ENCODE measurements at regions of chr10 and their contacts with region 1.

Region 1: DNA sequence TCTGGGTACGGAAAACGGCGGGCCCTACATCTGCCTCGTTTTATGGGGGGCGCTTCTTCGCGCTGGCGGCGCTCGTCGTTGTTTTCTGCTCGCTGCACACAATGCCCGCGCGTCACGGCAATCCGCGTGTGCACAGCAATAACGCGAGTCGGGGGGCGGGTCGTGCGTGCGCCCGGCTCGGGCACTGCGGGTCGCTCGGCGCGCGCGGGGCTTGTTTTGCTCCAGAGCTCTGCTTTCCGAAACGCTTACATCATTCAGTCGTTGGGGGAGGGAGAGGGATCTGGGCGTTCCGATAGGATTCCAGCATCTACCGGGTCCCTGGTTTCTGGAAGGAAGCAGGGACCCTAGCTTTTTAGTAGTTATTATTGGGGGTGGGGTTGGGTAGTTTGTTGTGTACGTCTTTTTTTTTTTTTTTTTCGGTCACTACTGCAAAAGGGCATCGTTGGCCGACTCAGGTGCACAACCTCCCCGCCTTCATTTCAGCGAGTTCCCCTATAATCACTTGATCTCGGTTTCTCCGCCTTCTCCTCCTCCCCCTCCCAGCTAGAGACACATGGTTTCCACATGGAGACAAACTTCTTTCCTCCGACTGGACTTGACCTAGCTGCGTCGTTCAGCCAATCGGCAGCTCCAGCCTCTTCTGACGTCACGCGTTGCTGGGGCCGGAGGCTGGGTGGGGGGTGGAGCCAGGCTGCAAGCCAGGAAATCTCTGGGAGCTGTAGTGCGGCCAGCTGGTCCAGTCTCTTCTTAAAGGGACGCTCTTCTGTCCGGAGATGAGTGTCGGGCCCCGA is 3.5 kb downstream of the MXI1 start:
- DNase-seq: peak; percentile 98
- H3K4me3 ChIP-seq: peak overlapping the region; percentile 92
- H3K27ac ChIP-seq: peak overlapping the region; percentile 89
- H3K4me1 ChIP-seq: peaks cover 11% of the 10 kb centered on the region
- H3K27me3 ChIP-seq: no peaks in the 10 kb centered on the region
- CTCF ChIP-seq: no peak

Region 2: DNA sequence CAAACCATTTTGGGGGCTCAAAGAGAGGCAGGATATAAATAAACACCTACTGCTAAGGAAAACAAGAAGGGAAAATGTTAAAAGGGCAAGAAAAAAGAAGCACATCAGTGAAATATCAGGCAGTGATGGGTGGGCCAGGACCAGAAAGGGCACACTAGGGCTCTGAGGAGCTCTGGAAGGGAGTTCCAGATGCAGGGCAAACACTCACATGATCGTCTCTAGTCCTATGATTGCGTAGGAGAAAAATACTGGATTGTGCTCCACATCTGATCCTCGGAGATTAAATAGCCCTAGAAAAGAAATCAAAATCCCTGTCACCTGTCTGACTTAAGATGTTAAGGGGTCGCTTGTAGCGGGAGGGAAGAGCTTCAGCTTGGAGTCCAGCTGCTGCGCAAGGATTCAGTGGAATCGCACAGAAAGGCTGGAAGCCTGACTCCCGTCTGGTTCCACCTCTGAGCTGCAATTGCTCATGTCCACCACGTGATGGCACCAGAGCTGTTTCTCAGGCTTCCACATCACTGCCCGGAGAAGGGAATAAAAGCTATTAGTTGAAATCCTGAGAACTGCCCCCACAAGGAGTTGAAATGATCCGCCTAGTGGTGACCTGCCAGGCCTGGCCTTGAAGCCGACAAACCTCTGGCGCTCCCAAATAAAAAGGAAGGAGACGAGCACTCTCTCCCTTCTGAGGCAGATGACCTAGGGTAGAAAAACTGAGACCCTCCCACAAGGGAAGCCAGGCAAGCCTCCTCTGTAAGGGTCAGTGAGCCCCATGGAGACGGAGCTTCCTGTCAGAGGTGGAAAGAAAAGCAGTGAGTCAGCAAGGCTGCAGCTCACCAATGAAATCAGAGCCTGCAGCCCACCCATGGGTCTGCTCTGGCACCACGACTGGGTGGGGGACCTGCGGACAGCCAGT is 326.8 kb before region 1 on chr10:
- CTCF ChIA-PET with region 1: interaction called, 5 read pairs
- POLR2A ChIA-PET with region 1: interaction called, 13 read pairs
- intact Hi-C with region 1: loop called (anchors 5 kb)
- DNase-seq: peak; percentile 89
- H3K4me3 ChIP-seq: no peak overlapping the region
- H3K27ac ChIP-seq: no peak overlapping the region
- H3K4me1 ChIP-seq: peaks cover 4% of the 10 kb centered on the region
- H3K27me3 ChIP-seq: no peaks in the 10 kb centered on the region
- CTCF ChIP-seq: peak; percentile 95

Region 3: GRCh38 chr10:109953766-109954165 is 257.1 kb before region 1 on chr10:
- CTCF ChIA-PET with region 1: no interaction called
- POLR2A ChIA-PET with region 1: no interaction called
- intact Hi-C with region 1: no loop called
- DNase-seq: no peak
- H3K4me3 ChIP-seq: no peak overlapping the region
- H3K27ac ChIP-seq: no peak overlapping the region
- H3K4me1 ChIP-seq: no peaks in the 10 kb centered on the region
- H3K27me3 ChIP-seq: no peaks in the 10 kb centered on the region
- CTCF ChIP-seq: no peak

Region 4: GRCh38 chr10:110137142-110137545 is 73.7 kb before region 1 on chr10:
- CTCF ChIA-PET with region 1: interaction called, 3 read pairs
- POLR2A ChIA-PET with region 1: no interaction called
- intact Hi-C with region 1: loop called (anchors 5 kb)
- DNase-seq: peak; percentile 81
- H3K4me3 ChIP-seq: no peak overlapping the region
- H3K27ac ChIP-seq: no peak overlapping the region
- H3K4me1 ChIP-seq: peaks cover 4% of the 10 kb centered on the region
- H3K27me3 ChIP-seq: no peaks in the 10 kb centered on the region
- CTCF ChIP-seq: peak; percentile 77

Region 5: GRCh38 chr10:110225756-110226542 is 15.1 kb after region 1 on chr10:
- CTCF ChIA-PET with region 1: interaction called, 6 read pairs
- POLR2A ChIA-PET with region 1: interaction called, 6 read pairs
- intact Hi-C with region 1: loop called (anchors 1 kb)
- DNase-seq: peak; percentile 97
- H3K4me3 ChIP-seq: peak overlapping the region; percentile 73
- H3K27ac ChIP-seq: peak overlapping the region; percentile 70
- H3K4me1 ChIP-seq: peaks cover 20% of the 10 kb centered on the region
- H3K27me3 ChIP-seq: no peaks in the 10 kb centered on the region
- CTCF ChIP-seq: peak; percentile 55

Region 6: DNA sequence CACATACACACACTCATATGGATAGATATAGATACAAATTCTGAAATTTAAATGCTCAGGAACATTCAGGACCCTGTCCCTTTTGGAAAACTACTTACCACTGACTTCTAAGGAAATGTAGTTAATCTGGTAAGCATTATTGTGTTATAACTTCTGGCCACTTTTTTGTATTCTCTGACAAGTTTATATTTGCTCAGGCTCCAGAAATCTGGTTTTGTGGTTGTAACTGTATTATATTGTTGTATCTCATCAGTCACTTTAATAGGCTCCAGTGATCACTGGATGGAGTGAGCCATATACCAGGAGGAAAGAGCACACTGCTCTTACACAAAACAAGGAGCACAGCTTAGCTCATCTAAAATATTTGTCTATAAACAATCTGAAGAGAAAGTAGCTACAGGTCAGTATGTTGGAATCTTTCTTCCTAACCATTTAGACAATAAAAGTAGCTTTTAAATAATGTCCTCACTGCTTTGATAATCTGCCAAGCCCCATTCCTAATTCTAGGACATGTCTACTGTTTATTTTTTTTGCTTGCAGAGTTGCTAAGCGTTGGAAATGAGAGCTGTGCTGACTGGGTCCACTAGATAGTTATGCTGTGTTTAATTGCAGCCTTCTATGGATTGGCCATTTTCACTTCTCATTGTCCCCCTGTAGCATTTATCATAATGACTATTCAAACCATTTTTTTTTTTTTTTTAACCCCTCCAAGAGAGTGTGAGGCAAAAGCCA is 50.0 kb after region 1 on chr10:
- CTCF ChIA-PET with region 1: no interaction called
- POLR2A ChIA-PET with region 1: no interaction called
- intact Hi-C with region 1: no loop called
- DNase-seq: no peak
- H3K4me3 ChIP-seq: no peak overlapping the region
- H3K27ac ChIP-seq: no peak overlapping the region
- H3K4me1 ChIP-seq: no peaks in the 10 kb centered on the region
- H3K27me3 ChIP-seq: no peaks in the 10 kb centered on the region
- CTCF ChIP-seq: no peak

Region 7: DNA sequence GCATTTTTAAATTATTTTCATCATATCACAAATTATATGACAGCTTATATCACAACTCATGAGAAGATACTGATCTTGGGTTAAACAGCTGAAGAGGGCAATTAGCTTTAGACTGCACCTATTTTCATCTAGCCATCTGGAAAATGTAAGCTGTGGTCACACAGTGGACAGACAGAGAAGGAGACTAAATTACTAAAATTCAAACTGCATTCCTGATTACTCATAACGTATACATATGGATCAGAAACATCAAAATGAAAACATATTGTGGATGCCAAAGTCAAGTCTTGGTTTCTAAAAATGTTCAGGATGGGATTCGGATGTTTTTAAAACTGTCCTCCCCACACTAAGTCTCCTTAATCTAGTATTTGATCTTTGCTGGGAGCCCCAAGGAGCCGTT is 701.5 kb after region 1 on chr10:
- CTCF ChIA-PET with region 1: no interaction called
- POLR2A ChIA-PET with region 1: no interaction called
- intact Hi-C with region 1: no loop called
- DNase-seq: no peak
- H3K4me3 ChIP-seq: no peak overlapping the region
- H3K27ac ChIP-seq: no peak overlapping the region
- H3K4me1 ChIP-seq: peaks cover 24% of the 10 kb centered on the region
- H3K27me3 ChIP-seq: no peaks in the 10 kb centered on the region
- CTCF ChIP-seq: no peak